AG04450 (cell line): ENCODE measurements at regions of chr19 and their contacts with region 1.

Region 1: GRCh38 chr19:54023191-54023590 is 31.8 kb downstream of the CACNG6 start:
- DNase-seq: no peak
- H3K4me3 ChIP-seq: no peak overlapping the region
- H3K27ac ChIP-seq: no peak overlapping the region
- H3K27me3 ChIP-seq: no peaks in the 10 kb centered on the region
- CTCF ChIP-seq: no peak

Region 2: DNA sequence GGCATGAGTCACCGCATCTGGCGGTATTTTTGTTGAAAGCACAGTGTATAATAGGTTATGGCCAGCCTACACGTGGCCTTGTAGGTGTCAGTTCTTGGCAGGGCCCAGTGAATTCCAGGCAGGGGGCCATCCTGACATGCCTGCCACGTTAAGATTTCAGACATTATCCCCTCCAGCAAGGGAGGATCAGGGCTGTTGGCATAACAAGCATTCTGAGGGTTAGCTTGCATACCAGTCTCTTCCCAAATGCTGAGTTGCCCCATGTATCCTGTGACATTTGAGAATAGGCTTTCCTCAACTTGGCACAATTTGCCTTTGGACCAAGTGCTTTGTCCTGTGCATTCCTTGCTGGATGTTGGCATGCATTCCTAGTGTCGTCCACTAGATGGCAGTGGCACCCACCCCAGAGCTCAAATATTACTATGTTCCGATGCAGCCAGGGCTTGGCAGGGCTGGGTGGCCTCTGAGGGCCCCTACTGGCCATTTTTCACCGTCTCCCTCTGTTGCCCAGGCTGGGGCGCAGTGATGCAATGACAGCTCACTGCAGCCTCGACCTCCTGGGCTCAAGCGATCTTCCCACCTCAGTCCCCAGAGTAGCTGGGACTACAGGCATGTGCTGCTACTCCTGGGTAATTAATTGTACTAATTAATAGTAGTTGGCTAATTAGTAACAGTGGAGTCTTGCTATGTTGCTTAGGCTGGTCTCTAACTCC is 230.3 kb before region 1 on chr19:
- CTCF ChIA-PET with region 1: interaction called, 97 read pairs
- POLR2A ChIA-PET with region 1: no interaction called
- DNase-seq: peak; percentile 61
- H3K4me3 ChIP-seq: no peak overlapping the region
- H3K27ac ChIP-seq: no peak overlapping the region
- H3K27me3 ChIP-seq: no peaks in the 10 kb centered on the region
- CTCF ChIP-seq: peak; percentile 99

Region 3: DNA sequence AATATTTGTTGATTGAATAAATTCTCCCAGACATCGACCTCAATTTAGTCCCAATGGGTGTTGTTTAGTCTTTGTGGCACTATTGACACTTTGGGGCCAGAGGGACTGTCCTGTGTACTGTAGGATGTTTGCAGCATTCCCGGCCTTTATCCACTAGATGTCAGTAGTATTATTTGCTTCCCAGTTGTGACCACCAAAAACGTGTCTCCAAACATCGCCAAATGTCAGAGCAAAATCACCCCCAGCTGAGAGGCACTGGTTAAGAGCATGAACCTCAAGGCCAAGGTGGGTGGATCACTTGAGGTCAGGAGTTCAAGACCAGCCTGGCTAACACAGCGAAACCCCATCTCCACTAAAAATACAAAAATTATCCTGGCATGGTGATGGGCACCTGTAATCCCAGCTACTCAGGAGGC is 214.5 kb before region 1 on chr19:
- CTCF ChIA-PET with region 1: interaction called, 51 read pairs
- POLR2A ChIA-PET with region 1: no interaction called
- DNase-seq: no peak
- H3K4me3 ChIP-seq: no peak overlapping the region
- H3K27ac ChIP-seq: no peak overlapping the region
- H3K27me3 ChIP-seq: no peaks in the 10 kb centered on the region
- CTCF ChIP-seq: peak; percentile 67

Region 4: GRCh38 chr19:53906211-53907192 is 116.7 kb before region 1 on chr19:
- CTCF ChIA-PET with region 1: interaction called, 33 read pairs
- POLR2A ChIA-PET with region 1: no interaction called
- DNase-seq: no peak
- H3K4me3 ChIP-seq: no peak overlapping the region
- H3K27ac ChIP-seq: no peak overlapping the region
- H3K27me3 ChIP-seq: peaks cover 10% of the 10 kb centered on the region
- CTCF ChIP-seq: peak; percentile 84

Region 5: DNA sequence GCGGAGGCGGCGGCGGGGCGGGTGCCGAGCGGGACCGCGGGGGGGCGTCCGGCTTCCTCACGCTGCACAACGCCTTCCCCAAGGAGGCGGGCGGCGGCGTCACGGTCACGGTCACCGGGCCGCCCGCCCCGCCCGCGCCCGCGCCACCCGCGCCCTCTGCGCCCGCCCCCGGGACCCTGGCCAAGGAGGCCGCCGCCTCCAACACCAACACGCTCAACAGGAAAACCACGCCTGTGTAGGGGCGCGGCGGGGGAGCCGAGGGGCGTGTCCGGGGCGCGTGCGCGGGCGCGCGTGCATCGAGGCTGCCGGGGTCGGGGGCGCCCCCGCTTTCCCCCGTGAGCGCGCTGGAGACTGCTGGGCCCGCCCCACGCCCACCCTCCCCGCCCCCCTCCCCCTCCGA is 40.6 kb before region 1 on chr19:
- CTCF ChIA-PET with region 1: interaction called, 12 read pairs
- POLR2A ChIA-PET with region 1: interaction called, 4 read pairs
- DNase-seq: no peak
- H3K4me3 ChIP-seq: peak overlapping the region; percentile 4; the same call in 1 of the 2 replicates
- H3K27ac ChIP-seq: no peak overlapping the region
- H3K27me3 ChIP-seq: no peaks in the 10 kb centered on the region
- CTCF ChIP-seq: no peak

Region 6: GRCh38 chr19:54002495-54003315 is 20.5 kb before region 1 on chr19:
- CTCF ChIA-PET with region 1: interaction called, 10 read pairs
- POLR2A ChIA-PET with region 1: no interaction called
- DNase-seq: no peak
- H3K4me3 ChIP-seq: no peak overlapping the region
- H3K27ac ChIP-seq: no peak overlapping the region
- H3K27me3 ChIP-seq: peaks cover 6% of the 10 kb centered on the region
- CTCF ChIP-seq: no peak

Region 7: GRCh38 chr19:54035215-54036178 is 12.3 kb after region 1 on chr19:
- CTCF ChIA-PET with region 1: interaction called, 20 read pairs
- POLR2A ChIA-PET with region 1: no interaction called
- DNase-seq: peak; percentile 50
- H3K4me3 ChIP-seq: no peak overlapping the region
- H3K27ac ChIP-seq: peak overlapping the region; percentile 85
- H3K27me3 ChIP-seq: no peaks in the 10 kb centered on the region
- CTCF ChIP-seq: no peak